Panc1 (cell line): ENCODE measurements at regions of chr14 and their contacts with region 1.

Region 1: GRCh38 chr14:89669193-89669592 is 252.2 kb upstream of the FOXN3 start:
- DNase-seq: no peak
- ATAC-seq: no peak
- H3K4me3 ChIP-seq: no peak overlapping the region
- H3K27ac ChIP-seq: no peak overlapping the region
- H3K4me1 ChIP-seq: no peaks in the 10 kb centered on the region
- H3K27me3 ChIP-seq: no peaks in the 10 kb centered on the region
- CTCF ChIP-seq: no peak

Region 2: GRCh38 chr14:89600950-89601826 is 68.0 kb before region 1 on chr14:
- CTCF ChIA-PET with region 1: no interaction called
- POLR2A ChIA-PET with region 1: no interaction called
- in situ Hi-C with region 1: no loop called
- intact Hi-C with region 1: no loop called
- DNase-seq: no peak
- ATAC-seq: no peak
- H3K4me3 ChIP-seq: no peak overlapping the region
- H3K27ac ChIP-seq: no peak overlapping the region
- H3K4me1 ChIP-seq: no peaks in the 10 kb centered on the region
- H3K27me3 ChIP-seq: no peaks in the 10 kb centered on the region
- CTCF ChIP-seq: no peak

Region 3: DNA sequence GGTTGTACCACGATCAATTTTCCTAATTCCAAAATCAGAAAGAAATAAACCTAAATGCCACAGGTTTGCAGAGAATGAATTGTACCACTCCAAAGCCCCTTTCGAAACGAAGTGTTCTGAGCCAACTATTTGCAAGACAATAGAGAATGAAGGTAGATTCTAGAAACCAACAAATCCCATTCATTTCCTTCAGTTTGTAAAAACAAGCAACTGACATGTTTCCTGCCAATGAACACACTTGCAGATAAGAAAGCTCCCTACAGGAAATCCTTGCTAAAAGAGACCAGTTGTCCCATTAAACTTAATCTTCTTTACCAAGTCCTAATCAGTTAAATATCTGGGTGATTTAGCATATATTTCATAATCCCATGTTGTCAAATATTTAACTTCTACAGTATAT is 53.8 kb before region 1 on chr14:
- CTCF ChIA-PET with region 1: no interaction called
- POLR2A ChIA-PET with region 1: interaction called, 13 read pairs
- in situ Hi-C with region 1: no loop called
- intact Hi-C with region 1: no loop called
- DNase-seq: no peak
- ATAC-seq: no peak
- H3K4me3 ChIP-seq: no peak overlapping the region
- H3K27ac ChIP-seq: no peak overlapping the region
- H3K4me1 ChIP-seq: no peaks in the 10 kb centered on the region
- H3K27me3 ChIP-seq: peaks cover 22% of the 10 kb centered on the region
- CTCF ChIP-seq: no peak